IMR-90 (cell line): ENCODE measurements at regions of chr10 and their contacts with region 1.

Region 1: DNA sequence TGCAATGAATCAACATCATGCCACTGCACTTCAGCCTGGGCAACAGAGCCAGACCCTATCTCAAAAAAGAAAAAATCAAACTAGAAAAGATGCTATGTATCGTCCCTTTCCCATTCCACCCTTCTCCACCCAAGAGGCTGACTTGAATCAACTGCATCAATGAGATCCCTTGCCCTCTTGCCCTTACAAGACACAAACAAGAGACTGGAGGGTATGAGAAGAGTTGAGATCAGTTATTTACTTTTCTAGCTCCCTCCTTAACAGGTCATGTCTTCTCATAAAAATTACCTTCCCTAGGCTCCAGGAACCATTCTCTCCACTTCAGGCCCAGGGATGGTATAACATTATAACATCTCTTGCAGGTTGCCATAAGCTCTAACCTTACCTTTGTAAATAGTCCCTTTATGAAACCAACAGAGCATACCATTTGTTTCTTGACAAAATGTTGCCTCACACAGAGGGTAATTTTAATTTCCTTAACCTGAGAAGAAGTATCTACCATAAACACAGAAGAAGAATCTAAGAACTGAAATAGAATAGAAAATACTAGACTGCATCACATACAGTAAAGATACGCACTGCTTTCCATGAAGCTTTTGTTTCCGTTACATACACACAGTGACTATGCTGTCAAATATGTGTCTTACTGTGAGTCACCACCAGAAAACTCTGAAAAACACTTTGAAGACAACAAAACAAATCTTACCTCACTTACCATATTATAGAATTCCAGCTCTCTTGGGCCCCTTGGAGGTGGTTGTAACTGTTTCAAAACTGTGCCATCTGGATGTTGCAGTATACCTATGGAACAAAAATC is 30.5 kb downstream of the IPMK start:
- DNase-seq: peak; percentile 92
- ATAC-seq: peak; percentile 86
- H3K4me3 ChIP-seq: no peak overlapping the region
- H3K27ac ChIP-seq: peak overlapping the region; percentile 52; the same call in 1 of the 2 replicates
- H3K4me1 ChIP-seq: peaks cover 18% of the 10 kb centered on the region
- H3K27me3 ChIP-seq: no peaks in the 10 kb centered on the region
- CTCF ChIP-seq: no peak
- POLR2A ChIP-seq: no peak
- RAD21 ChIP-seq: no peak

Region 2: GRCh38 chr10:56522166-56522565 is 1715.1 kb before region 1 on chr10:
- CTCF ChIA-PET with region 1: no interaction called
- POLR2A ChIA-PET with region 1: interaction called, 17 read pairs
- dilution Hi-C with region 1: no loop called
- in situ Hi-C with region 1: no loop called
- intact Hi-C with region 1: no loop called
- DNase-seq: no peak
- ATAC-seq: no peak
- H3K4me3 ChIP-seq: no peak overlapping the region
- H3K27ac ChIP-seq: no peak overlapping the region
- H3K4me1 ChIP-seq: no peaks in the 10 kb centered on the region
- H3K27me3 ChIP-seq: no peaks in the 10 kb centered on the region
- CTCF ChIP-seq: no peak
- POLR2A ChIP-seq: no peak
- RAD21 ChIP-seq: no peak

Region 3: DNA sequence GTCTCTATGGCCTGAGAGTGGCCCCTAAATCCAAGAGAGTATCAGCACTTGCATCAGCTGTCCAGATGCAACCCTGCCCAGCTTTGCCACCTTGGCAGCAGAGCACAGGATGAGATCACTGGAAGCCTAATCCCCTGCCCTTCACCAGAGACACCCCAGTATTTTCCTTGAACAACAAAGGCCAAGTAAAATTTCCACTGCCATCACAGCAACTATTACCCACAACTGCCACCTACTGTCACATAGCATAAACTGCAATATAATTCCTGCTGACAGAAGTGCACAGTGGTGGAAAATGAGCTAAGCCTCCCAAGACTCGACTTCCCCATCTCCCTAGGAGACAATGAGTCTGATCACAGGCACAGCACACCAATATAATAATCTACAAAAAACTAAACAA is 1413.4 kb before region 1 on chr10:
- CTCF ChIA-PET with region 1: no interaction called
- POLR2A ChIA-PET with region 1: no interaction called
- dilution Hi-C with region 1: no loop called
- in situ Hi-C with region 1: no loop called
- intact Hi-C with region 1: loop called (anchors 10 kb)
- DNase-seq: no peak
- ATAC-seq: no peak
- H3K4me3 ChIP-seq: no peak overlapping the region
- H3K27ac ChIP-seq: no peak overlapping the region
- H3K4me1 ChIP-seq: no peaks in the 10 kb centered on the region
- H3K27me3 ChIP-seq: no peaks in the 10 kb centered on the region
- CTCF ChIP-seq: 0 out of 2 replicates have a peak, but pooled peaks have one; percentile 10
- POLR2A ChIP-seq: no peak
- RAD21 ChIP-seq: peak; percentile 15; the same call in 1 of the 2 replicates